ENCODE measurements at regions of chr20 and their contacts with region 1.

Region 1: GRCh38 chr20:49291200-49291599 is 13.3 kb upstream of the ZNFX1 start:
- DNase-seq: no peak
- CTCF ChIP-seq: no peak

Region 2: GRCh38 chr20:49261173-49261572 is 30.0 kb before region 1 on chr20:
- CTCF ChIA-PET with region 1: no interaction called
- POLR2A ChIA-PET with region 1: no interaction called
- DNase-seq: no peak
- CTCF ChIP-seq: no peak

Region 3: GRCh38 chr20:49278036-49278817 is 13.0 kb before region 1 on chr20 and contains the start of gene ZNFX1:
- CTCF ChIA-PET with region 1: interaction called, 12 read pairs
- POLR2A ChIA-PET with region 1: interaction called, 5 read pairs
- DNase-seq: peak; percentile 95
- CTCF ChIP-seq: peak; percentile 18

Region 4: DNA sequence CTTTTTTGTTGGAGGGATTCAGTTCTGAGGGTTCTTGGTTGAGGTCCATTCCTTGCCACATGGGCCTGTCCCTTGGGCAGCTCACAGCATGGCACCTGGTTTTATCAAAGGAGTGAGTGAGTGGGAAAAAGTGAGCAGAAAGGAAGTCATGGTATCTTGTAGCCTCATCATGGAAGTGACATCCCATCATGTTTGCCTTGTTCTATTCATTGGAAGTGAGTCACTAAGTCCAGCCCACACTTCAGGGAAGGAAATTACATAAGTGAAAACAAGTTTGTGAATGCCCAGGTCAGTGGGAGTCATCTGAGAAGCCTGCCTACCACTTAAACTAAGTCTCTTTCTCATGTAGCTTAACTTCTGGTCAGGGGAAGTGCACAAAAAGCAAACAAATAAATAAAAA is 19.5 kb after region 1 on chr20:
- CTCF ChIA-PET with region 1: no interaction called
- POLR2A ChIA-PET with region 1: no interaction called
- DNase-seq: no peak
- CTCF ChIP-seq: no peak

Region 5: DNA sequence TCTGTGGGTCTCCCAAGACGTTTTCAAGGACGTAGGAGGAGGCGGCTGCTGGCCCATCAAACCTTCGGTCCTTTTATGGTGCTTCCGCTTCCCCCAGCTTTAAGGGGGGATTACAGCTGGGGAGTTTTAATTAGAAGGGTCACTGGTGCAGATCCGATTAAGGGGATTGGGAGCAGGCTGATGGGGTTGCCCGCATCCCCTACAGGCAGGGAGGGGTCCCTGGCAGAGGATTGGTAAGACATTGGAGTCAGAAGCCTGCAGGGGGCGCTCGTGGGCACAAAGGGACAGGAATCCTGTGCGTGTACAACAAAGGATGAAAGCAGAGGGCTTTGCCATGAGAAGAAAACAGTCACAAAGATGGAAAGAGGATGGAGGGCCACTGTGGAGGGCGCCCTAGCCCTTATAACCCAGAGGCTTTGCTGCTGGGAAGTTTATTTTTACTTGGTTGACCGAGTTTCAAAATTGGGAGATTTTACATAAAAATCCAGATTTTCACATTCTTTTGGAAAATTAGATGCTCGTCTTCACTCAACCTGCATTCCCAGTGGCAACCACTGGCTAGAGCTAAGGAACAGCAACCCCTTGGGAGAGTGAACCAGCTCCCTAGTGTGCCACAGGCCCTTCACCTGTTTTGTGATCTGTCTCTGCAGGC is 93.4 kb after region 1 on chr20:
- CTCF ChIA-PET with region 1: no interaction called
- POLR2A ChIA-PET with region 1: no interaction called
- DNase-seq: peak; percentile 65
- CTCF ChIP-seq: peak; percentile 51

Region 6: GRCh38 chr20:49447946-49448809 is 157.0 kb after region 1 on chr20:
- CTCF ChIA-PET with region 1: no interaction called
- POLR2A ChIA-PET with region 1: no interaction called
- DNase-seq: no peak
- CTCF ChIP-seq: no peak